MCF 10A (cell line): ENCODE measurements at regions of chr1 and their contacts with region 1.

Region 1: DNA sequence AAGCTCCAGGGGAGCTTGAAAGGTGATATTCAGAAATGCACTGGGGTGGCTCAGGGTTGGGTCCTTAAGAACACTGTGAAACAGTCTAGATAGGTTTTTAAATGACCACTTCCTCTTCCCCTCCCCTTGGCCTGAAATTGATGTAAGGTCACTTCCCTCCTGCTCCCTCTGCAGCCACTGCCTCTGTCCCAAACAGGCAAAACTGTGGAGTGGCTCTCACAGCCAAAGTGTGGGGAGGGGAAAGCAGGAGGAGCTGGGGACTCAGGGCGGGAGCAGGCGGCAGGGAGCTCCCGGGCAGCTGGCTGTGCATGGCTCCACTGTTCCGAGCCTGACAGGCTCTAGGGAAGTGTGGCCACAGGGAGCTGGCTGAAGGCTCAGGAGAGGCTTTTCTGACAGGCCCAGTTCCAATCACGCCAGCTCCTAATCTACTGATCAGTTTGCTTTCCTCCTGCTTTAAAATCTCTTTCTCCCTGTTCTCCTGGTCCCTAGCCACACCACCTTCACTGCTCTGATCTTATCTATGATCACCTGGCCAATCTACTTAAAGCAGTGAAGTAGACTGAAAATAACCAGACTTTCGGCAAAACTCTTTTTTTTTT is 5.1 kb upstream of the CSRP1 start:
- DNase-seq: no peak
- H3K4me3 Mint-ChIP-seq: no peak overlapping the region
- H3K27ac Mint-ChIP-seq: peak overlapping the region; percentile 31
- H3K4me1 Mint-ChIP-seq: peaks cover 7% of the 10 kb centered on the region
- H3K27me3 Mint-ChIP-seq: no peaks in the 10 kb centered on the region
- CTCF ChIP-seq: no peak

Region 2: DNA sequence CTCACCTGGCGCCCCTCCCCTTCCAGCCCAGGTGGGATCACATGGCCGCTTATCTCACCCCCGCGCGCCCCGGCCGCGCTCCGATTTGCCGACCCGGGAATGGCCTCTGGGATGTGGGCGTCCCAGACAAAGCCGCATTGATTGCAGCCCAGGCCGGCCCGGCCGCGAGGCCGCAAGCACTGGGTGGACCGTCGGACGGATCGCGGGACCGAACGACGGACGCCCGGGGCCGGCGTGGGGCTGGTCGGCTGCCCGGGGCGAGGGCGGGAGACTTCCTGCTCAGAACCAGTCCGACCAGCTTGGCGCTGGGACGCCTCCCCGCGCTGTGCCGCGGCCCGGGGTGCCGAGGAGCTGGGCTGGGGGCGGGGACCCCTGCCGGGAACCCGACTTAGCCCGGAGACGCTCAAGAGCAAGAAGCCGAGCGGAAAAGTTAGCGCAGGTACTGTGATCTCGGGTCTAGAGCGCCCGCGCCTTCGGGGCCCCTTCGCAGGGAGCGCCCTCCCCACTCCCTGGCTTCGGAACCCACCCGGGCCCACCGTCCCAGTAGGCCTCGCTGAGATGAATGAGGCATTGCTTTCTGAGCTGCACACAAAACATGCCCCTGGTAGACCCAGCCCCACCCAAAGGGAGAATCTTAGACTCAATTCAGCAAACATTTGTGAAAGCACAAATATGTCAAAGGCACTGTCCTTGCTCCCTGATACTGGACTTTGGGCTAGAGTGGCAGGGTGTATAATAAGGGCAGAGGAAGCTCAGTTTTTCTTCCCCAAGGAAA is 112.5 kb before region 1 on chr1:
- CTCF ChIA-PET with region 1: interaction called, 14 read pairs
- POLR2A ChIA-PET with region 1: no interaction called
- intact Hi-C with region 1: no loop called
- DNase-seq: peak; percentile 75
- H3K4me3 Mint-ChIP-seq: peak overlapping the region; percentile 66
- H3K27ac Mint-ChIP-seq: no peak overlapping the region
- H3K4me1 Mint-ChIP-seq: peaks cover 24% of the 10 kb centered on the region
- H3K27me3 Mint-ChIP-seq: no peaks in the 10 kb centered on the region
- CTCF ChIP-seq: no peak

Region 3: GRCh38 chr1:201456499-201457309 is 55.3 kb before region 1 on chr1:
- CTCF ChIA-PET with region 1: interaction called, 3,816 read pairs
- POLR2A ChIA-PET with region 1: interaction called, 227 read pairs
- intact Hi-C with region 1: no loop called
- DNase-seq: peak; percentile 97
- H3K4me3 Mint-ChIP-seq: no peak overlapping the region
- H3K27ac Mint-ChIP-seq: peak overlapping the region; percentile 67
- H3K4me1 Mint-ChIP-seq: peaks cover 49% of the 10 kb centered on the region
- H3K27me3 Mint-ChIP-seq: no peaks in the 10 kb centered on the region
- CTCF ChIP-seq: no peak

Region 4: DNA sequence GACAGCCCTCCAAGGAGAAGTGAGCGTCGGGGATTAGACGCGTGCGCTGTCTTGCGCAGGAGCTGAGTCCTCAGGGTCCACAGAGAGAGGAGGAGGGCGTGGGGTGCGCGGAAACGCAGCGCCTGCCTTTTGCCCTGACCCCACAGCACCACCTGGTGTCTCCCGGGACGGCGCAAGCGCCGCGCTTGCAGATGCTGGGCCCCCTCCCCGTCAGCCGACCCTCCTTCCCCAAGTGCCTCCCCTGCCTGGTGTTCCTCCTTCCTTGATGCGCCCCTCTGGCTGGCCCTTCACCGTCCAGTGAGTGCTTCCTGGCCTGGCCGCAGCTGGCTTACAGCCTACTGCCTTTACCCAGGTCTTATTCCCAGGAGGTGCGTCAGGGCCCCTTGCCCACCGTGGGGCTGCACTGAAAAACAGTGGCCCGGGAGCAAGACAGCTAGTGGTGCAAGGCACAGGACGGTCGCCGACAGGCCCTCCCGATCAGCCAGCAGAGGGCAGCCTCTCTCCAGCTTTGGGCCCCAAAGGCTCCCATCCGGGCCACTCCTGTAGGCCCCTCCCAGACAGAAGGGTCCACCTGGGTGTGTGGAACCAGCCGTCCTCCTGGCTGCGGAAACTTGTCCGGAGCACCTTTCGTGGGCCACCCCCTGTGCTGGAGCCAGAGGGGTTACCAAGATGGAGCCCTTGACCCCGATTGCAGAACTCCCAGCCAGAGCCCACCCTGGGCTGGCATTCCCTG is 30.1 kb before region 1 on chr1:
- CTCF ChIA-PET with region 1: interaction called, 3,816 read pairs
- POLR2A ChIA-PET with region 1: interaction called, 330 read pairs
- intact Hi-C with region 1: loop called (anchors 1 kb)
- DNase-seq: peak; percentile 94
- H3K4me3 Mint-ChIP-seq: peak overlapping the region; percentile 0
- H3K27ac Mint-ChIP-seq: no peak overlapping the region
- H3K4me1 Mint-ChIP-seq: peaks cover 33% of the 10 kb centered on the region
- H3K27me3 Mint-ChIP-seq: no peaks in the 10 kb centered on the region
- CTCF ChIP-seq: peak; percentile 100

Region 5: GRCh38 chr1:201525197-201525778 is 13.2 kb after region 1 on chr1:
- CTCF ChIA-PET with region 1: interaction called, 3,816 read pairs
- POLR2A ChIA-PET with region 1: interaction called, 3 read pairs
- intact Hi-C with region 1: no loop called
- DNase-seq: no peak
- H3K4me3 Mint-ChIP-seq: no peak overlapping the region
- H3K27ac Mint-ChIP-seq: no peak overlapping the region
- H3K4me1 Mint-ChIP-seq: peaks cover 8% of the 10 kb centered on the region
- H3K27me3 Mint-ChIP-seq: no peaks in the 10 kb centered on the region
- CTCF ChIP-seq: no peak